Calu3 (cell line): ENCODE measurements at regions of chr6 and their contacts with region 1.

Region 1: GRCh38 chr6:42050266-42051032 is at the start of gene TAF8:
- DNase-seq: peak; percentile 94
- H3K4me3 Mint-ChIP-seq: peak within 1 kb of the TSS; percentile 95
- H3K27ac Mint-ChIP-seq: peak within 1 kb of the TSS; percentile 93
- H3K4me1 Mint-ChIP-seq: peaks cover 27% of the 10 kb centered on the region
- H3K27me3 Mint-ChIP-seq: no peaks in the 10 kb centered on the region
- CTCF ChIP-seq: no peak
- total RNA-seq, gene TAF8: 32.6 and 34.0 TPM in 2 replicates

Region 2: DNA sequence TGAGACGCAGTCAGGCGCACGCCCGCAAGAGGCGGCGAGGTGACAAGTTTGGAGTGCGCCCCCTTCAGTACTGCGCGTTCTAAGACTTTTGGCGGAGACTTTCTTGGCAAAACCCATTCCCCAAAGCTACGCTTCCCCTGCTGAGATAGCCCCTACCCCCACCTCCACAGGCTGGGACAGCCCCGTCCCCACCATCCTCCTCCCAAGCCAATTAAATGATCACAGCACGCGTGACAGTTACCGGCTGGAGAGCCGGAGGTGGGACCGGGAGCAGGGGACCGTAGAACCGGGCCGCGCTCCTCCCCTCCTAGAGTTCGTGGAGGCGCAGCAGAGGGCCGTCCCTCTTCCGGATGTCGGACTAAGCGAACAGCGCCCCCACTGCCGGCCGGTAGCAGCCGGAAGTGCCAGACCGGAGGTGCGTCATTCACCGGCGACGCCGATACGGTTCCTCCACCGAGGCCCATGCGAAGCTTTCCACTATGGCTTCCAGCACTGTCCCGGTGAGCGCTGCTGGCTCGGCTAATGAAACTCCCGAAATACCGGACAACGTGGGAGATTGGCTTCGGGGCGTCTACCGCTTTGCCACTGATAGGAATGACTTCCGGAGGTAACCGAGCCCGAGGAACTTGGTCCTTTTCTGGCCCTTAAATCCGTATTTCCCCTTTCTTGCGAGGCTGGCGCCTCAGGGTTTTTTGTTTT is 263.1 kb before region 1 on chr6 and contains the start of gene TOMM6:
- CTCF ChIA-PET with region 1: interaction called, 15 read pairs
- intact Hi-C with region 1: no loop called
- DNase-seq: peak; percentile 98
- H3K4me3 Mint-ChIP-seq: peak within 1 kb of the TSS; percentile 95
- H3K27ac Mint-ChIP-seq: peak within 1 kb of the TSS; percentile 94
- H3K4me1 Mint-ChIP-seq: peaks cover 36% of the 10 kb centered on the region
- H3K27me3 Mint-ChIP-seq: no peaks in the 10 kb centered on the region
- CTCF ChIP-seq: peak; percentile 95
- total RNA-seq, gene TOMM6: 251 and 265 TPM in 2 replicates

Region 3: GRCh38 chr6:41914343-41914742 is 136.1 kb before region 1 on chr6:
- CTCF ChIA-PET with region 1: no interaction called
- intact Hi-C with region 1: no loop called
- DNase-seq: no peak
- H3K4me3 Mint-ChIP-seq: no peak overlapping the region
- H3K27ac Mint-ChIP-seq: no peak overlapping the region
- H3K4me1 Mint-ChIP-seq: peaks cover 9% of the 10 kb centered on the region
- H3K27me3 Mint-ChIP-seq: no peaks in the 10 kb centered on the region
- CTCF ChIP-seq: no peak

Region 4: GRCh38 chr6:42158011-42158410 is 107.6 kb after region 1 on chr6:
- CTCF ChIA-PET with region 1: no interaction called
- intact Hi-C with region 1: no loop called
- DNase-seq: no peak
- H3K4me3 Mint-ChIP-seq: no peak overlapping the region
- H3K27ac Mint-ChIP-seq: no peak overlapping the region
- H3K4me1 Mint-ChIP-seq: peaks cover 8% of the 10 kb centered on the region
- H3K27me3 Mint-ChIP-seq: no peaks in the 10 kb centered on the region
- CTCF ChIP-seq: no peak

Region 5: DNA sequence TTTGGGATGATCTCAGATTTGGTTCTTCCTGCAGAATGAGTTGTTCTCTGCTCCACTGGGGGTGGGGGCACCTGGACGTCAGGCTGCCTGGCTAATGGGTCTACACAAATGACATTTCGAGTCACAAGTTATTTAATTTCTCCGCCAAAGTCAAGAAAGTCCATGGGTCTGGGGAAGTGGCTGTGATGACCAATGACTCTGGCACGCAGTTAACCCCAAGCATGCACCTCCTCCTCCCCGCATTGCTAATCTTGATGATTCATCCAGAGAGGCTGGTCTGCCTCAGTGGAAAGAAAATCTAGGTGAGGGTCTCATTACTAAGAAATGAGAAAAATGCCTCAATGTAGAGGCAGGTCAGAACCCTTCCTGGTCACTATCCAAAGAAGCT is 265.5 kb after region 1 on chr6:
- CTCF ChIA-PET with region 1: no interaction called
- intact Hi-C with region 1: no loop called
- DNase-seq: peak; percentile 91
- H3K4me3 Mint-ChIP-seq: peak overlapping the region; percentile 12
- H3K27ac Mint-ChIP-seq: peak overlapping the region; percentile 68
- H3K4me1 Mint-ChIP-seq: peaks cover 62% of the 10 kb centered on the region
- H3K27me3 Mint-ChIP-seq: no peaks in the 10 kb centered on the region
- CTCF ChIP-seq: no peak